Gastrocnemius medialis (tissue), 4 donors: ENCODE measurements at regions of chr4 and their contacts with region 1.

Region 1: DNA sequence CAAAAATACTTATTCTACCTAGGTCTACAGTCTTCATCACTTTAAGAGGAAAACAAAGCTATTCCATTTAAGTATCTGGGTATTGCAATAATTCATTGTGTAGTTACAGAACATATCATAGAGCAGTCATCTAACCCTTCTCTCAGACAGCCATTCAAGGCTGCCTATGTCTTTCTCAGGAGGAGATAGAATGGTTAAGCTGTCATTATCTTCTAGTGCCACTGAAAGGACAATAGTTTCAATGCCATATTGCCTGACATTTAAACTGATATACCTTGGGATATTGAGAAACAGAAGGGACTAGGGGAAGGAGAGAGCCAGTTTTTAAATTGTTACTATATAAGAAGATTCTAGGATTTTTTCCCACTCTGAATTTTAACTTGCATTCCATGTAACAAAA is 527.0 kb downstream of the GRID2 start:
- DNase-seq: no peak
- ATAC-seq: no peak
- H3K4me3 ChIP-seq: no peak overlapping the region
- H3K27ac ChIP-seq: no peak overlapping the region
- H3K4me1 ChIP-seq: no peaks in the 10 kb centered on the region
- H3K27me3 ChIP-seq: no peaks in the 10 kb centered on the region
- CTCF ChIP-seq: no peak
- POLR2A ChIP-seq: no peak

Region 2: GRCh38 chr4:92254767-92255442 is 575.9 kb before region 1 on chr4:
- in situ Hi-C with region 1: no loop called
- intact Hi-C with region 1: no loop called
- DNase-seq: no peak
- ATAC-seq: no peak
- H3K4me3 ChIP-seq: no peak overlapping the region
- H3K27ac ChIP-seq: no peak overlapping the region
- H3K4me1 ChIP-seq: no peaks in the 10 kb centered on the region
- H3K27me3 ChIP-seq: no peaks in the 10 kb centered on the region
- CTCF ChIP-seq: no peak
- POLR2A ChIP-seq: no peak

Region 3: GRCh38 chr4:92776080-92776479 is 54.7 kb before region 1 on chr4:
- in situ Hi-C with region 1: loop called in 1 of 4 experiments (anchors 10 kb)
- intact Hi-C with region 1: no loop called
- DNase-seq: no peak
- ATAC-seq: no peak
- H3K4me3 ChIP-seq: no peak overlapping the region
- H3K27ac ChIP-seq: no peak overlapping the region
- H3K4me1 ChIP-seq: no peaks in the 10 kb centered on the region
- H3K27me3 ChIP-seq: no peaks in the 10 kb centered on the region
- CTCF ChIP-seq: no peak
- POLR2A ChIP-seq: no peak